Motor neuron (in vitro differentiated cells): ENCODE measurements at regions of chr1 and their contacts with region 1.

Region 1: DNA sequence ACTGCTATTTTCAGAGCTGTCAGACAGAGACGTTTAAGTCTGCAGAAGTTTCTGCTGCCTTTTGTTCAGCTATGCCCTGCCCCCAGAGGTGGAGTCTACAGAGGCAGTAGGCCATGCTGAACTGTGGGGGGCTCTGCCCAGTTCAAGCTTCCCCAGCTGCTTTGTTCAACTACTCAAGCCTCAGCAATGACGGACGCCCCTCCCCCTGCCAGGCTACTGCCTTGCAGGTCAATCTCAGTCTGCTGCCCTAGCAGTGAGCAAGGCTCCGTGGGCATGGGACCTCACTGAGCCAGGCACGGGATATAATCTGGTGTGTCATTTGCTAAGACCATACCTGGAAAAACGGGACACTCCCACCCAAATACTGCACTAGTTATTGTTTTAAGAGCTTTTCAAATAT is 219.7 kb downstream of the BRINP3 start:
- ATAC-seq: no peak
- H3K4me3 ChIP-seq: no peak overlapping the region
- H3K27ac ChIP-seq: no peak overlapping the region
- H3K4me1 ChIP-seq: no peaks in the 10 kb centered on the region

Region 2: DNA sequence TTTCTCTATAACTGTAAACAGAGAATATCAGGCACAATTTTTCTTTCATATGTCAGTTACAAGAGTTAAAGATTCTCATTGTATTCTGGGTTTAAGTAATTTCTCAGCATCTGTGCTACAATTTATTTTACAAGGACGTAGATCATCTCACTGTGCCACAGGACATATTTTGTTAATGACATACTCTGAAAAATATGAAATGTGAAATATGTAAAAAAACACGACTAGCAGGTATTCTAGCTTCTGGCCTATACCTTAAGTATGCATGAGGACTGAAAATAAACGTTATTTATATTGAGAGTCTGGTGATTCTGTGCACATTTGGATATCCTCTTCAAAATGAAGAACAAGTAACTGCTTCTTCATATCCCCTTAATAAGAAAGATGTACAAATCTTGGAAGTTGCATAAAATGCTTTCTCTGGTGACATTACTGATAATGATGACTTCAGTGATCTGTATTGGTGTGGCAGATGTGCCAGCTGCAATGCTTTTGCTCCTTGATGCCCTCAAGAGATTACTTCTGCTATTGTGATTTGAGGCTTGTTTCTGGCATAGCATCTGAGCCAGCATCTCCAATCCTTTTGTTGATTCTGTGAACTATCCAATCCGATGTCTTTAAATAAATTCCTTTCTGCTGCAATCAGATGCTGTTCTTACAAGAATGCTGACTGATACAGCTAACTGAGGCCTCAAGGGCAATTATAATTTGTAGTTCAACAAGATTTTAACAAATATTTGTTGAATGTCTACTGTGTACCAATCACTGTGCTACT is 88.9 kb before region 1 on chr1:
- in situ Hi-C with region 1: loop called in 1 of 9 experiments (anchors 25 kb)
- ATAC-seq: peak in 2 of 8 experiments; percentile 32 to 59
- H3K4me3 ChIP-seq: no peak overlapping the region
- H3K27ac ChIP-seq: no peak overlapping the region
- H3K4me1 ChIP-seq: peaks cover 0 to 3% of the 10 kb centered on the region in 2 donors